ENCODE measurements at regions of chr2 and their contacts with region 1.

Region 1: DNA sequence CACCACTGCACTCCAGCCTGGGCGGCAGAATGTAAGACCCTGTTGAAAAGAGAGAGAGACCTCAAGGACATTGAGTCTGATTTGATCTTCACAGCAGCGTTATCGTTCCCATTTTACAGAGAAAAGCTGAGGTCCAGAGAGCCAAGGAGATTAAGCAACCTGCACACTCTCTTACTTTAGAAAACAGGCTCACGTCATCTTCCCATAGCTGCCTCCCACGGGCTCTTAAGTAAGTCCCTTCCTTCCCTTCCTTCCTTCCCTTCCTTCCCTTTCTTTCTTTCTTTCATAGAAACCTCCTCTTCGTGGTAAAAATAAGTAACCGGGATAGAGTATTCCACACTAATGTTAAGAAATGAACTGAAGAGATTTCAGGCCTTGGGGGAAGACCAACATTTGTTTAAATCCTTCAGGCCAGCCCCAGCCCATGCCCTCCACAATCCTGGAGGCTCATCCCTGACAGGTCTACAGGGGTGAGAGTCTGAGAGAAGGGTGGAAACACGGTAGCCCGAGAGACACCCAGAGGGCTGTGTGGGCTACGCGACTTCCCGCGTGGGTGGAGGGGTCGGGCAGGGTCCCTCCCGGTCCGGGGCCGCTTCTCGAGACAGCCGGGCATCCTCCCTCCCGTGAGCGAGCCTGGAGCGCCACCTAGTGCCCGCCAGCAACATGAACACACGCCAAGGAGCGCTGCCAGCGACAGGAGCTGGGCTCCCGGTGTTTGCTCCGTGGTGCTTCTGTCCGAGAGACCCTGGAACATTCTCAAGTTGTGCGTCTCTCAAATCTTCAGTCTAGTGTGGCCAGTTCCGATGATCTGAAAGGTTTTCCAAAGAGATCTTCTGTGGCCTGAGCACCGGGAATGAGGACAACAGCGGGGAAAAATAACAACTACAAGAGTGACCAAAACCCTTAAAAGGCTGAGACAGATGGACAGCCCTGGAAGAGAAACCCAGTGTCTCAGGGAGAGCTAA is 160.3 kb downstream of the INO80D start:
- DNase-seq: no peak
- H3K4me3 ChIP-seq: peak overlapping the region; percentile 21
- H3K27me3 ChIP-seq: peaks cover 10% of the 10 kb centered on the region
- CTCF ChIP-seq: peak; percentile 96

Region 2: DNA sequence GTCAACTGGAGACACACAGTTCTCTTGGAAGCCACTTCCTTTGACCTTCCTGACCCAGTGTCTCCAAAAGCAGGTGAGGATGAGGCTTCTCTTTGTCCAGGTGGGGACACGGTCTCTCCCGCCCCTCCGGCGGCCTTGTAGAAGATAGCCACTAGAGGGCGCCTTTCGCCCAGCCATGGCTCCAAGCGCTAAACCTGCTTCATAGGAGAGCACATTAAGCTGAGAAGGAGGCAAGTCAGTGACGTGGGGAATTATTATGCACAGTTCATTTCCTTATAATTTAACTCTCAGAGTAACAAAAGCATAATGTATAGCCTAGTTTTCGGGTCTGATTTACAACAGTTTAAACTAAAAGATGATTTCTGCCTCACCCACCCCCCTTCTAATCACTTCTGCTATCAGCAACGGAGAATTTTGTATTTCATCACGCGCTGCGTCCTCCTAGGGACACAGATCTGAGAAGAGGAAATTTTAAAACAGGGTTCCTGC is 1780.3 kb before region 1 on chr2:
- CTCF ChIA-PET with region 1: interaction called, 13 read pairs
- POLR2A ChIA-PET with region 1: no interaction called
- DNase-seq: no peak
- H3K4me3 ChIP-seq: peak overlapping the region; percentile 28
- H3K27me3 ChIP-seq: no peaks in the 10 kb centered on the region
- CTCF ChIP-seq: peak; percentile 95

Region 3: DNA sequence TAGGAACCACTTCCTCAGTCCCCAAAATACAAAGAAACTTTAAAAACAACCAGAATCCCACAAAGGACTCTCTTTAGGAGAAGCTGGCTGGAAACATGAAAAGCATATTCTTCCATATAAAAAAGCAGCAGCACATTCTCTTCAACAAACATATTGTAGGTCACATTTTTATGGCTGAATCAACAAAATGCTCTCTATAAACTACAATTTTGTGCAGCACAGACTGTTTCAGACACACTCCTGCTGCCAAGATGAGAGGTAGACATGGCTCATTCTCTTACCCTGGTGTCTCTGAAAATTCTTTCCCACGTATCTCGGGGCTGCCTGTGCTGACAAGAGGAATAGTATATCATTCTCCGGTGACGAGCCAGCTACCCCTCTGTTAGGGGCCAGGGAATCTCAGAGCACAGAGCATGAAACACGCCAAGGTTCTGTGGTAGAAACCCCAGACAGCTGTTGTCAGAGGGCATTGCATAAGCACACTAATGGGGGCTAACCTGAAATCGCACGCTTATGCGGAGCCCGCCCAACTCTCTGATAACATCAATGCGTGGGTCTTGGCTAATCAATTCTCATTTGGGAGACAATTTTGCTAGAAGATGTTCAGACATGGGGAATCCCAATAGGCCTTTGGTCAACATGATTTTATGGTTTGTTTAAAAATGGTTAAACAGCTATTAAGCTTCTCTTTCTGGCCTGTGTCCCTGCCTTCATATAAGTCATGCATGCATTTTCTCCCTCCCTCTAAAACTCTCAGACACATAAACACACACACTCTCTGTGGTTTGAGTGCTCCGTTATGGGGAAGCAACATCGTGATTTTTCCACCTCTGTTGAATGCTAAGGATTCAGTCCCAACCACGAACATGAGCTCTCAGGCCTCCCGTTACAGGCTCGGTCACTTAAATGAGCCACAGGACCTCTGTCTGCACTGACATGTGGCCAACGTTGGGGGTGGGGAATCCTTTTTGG is 17.2 kb before region 1 on chr2:
- CTCF ChIA-PET with region 1: interaction called, 30 read pairs
- POLR2A ChIA-PET with region 1: no interaction called
- DNase-seq: no peak
- H3K4me3 ChIP-seq: no peak overlapping the region
- H3K27me3 ChIP-seq: peaks cover 4% of the 10 kb centered on the region; the same call in 1 of the 2 replicates
- CTCF ChIP-seq: no peak

Region 4: DNA sequence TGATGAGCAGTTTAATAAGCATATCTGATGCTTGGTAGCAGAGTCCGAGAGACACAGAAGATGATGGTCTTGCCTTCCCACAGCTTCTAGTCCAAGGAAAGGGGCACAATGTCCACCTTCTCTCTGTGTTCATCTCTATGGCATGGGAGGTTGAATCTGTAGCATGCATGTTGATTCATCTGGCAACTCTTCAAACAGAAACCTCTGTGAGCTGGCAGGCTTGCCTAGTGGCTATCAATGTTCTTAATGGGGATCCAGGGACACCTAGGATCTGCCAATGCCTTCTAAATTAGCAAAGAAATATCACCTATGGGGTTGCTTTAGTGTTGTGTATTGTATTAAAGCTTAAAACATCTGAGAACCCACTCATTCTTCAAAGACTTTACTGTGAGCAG is 10.5 kb before region 1 on chr2:
- CTCF ChIA-PET with region 1: interaction called, 30 read pairs
- POLR2A ChIA-PET with region 1: no interaction called
- DNase-seq: no peak
- H3K4me3 ChIP-seq: no peak overlapping the region
- H3K27me3 ChIP-seq: peaks cover 4% of the 10 kb centered on the region; the same call in 1 of the 2 replicates
- CTCF ChIP-seq: no peak